ENCODE measurements at regions of chr17 and their contacts with region 1.

Region 1: GRCh38 chr17:59680314-59680713 is 26.9 kb downstream of the PTRH2 start:
- DNase-seq: no peak
- H3K4me3 ChIP-seq: no peak overlapping the region
- H3K27ac ChIP-seq: no peak overlapping the region
- H3K4me1 ChIP-seq: no peaks in the 10 kb centered on the region
- CTCF ChIP-seq: no peak

Region 2: GRCh38 chr17:59506894-59507726 is 173.2 kb before region 1 on chr17:
- CTCF ChIA-PET with region 1: no interaction called
- POLR2A ChIA-PET with region 1: no interaction called
- intact Hi-C with region 1: no loop called
- DNase-seq: no peak
- H3K4me3 ChIP-seq: no peak overlapping the region
- H3K27ac ChIP-seq: no peak overlapping the region
- H3K4me1 ChIP-seq: no peaks in the 10 kb centered on the region
- CTCF ChIP-seq: no peak

Region 3: GRCh38 chr17:59534598-59534997 is 145.7 kb before region 1 on chr17:
- CTCF ChIA-PET with region 1: no interaction called
- POLR2A ChIA-PET with region 1: no interaction called
- intact Hi-C with region 1: no loop called
- DNase-seq: peak; percentile 34
- H3K4me3 ChIP-seq: no peak overlapping the region
- H3K27ac ChIP-seq: no peak overlapping the region
- H3K4me1 ChIP-seq: no peaks in the 10 kb centered on the region
- CTCF ChIP-seq: peak; percentile 56

Region 4: DNA sequence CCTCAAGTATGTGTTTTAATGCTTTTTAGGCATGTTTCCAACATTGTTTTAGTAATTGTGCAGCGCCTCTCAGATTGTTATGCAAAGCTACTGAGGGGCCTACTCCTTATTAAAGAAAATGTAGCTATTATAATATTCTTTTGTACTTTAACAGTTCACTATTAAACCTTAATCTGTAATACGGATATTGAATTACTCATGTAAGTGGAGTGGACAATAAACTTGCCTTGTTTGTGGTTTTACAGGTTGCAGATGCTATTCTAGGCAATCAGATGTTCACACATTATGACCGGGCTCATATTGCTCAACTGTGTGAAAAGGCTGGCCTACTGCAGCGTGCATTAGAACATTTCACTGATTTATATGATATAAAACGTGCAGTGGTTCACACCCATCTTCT is 14.1 kb before region 1 on chr17:
- CTCF ChIA-PET with region 1: no interaction called
- POLR2A ChIA-PET with region 1: interaction called, 16 read pairs
- intact Hi-C with region 1: loop called (anchors 2 kb)
- DNase-seq: no peak
- H3K4me3 ChIP-seq: no peak overlapping the region
- H3K27ac ChIP-seq: no peak overlapping the region
- H3K4me1 ChIP-seq: no peaks in the 10 kb centered on the region
- CTCF ChIP-seq: no peak

Measured in OCI-LY7 (cell line).